Sigmoid colon (tissue), 7 donors: ENCODE measurements at regions of chr9 and their contacts with region 1.

Region 1: DNA sequence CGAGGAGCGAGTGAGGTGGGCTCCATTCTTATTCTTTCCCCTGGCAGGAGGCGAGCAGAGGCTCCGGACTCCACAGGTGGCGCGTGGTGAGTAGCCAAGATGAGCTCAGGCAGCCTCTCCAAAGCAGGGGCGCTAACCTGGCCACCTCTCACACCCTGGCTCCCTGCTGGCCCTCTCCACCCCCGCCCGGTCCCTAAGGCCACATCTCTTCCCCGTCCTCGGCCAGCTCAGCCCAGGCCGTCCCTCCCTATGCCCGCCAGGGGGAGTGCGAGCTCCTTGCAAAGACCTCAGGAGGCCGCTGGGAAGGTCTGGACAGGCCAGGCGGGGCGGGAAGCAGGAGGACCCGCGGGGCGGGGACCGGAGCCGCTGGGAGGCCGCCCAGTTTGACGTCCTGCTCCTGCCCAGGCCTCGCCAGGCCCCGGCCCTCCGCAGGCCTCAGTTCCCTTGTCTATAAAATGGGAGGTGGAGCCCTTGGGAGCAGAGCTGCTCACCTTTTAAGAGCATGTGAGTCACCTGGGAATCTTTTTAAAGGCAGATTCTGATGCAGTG is 46.3 kb upstream of the GGTA1 start:
- DNase-seq: peak; percentile 98
- H3K4me3 ChIP-seq: peak overlapping the region in 1 of 4 donors; percentile 30
- H3K27ac ChIP-seq: peak overlapping the region in 2 of 4 donors; percentile 18 to 41
- H3K4me1 ChIP-seq: peaks cover 0 to 20% (median 15%) of the 10 kb centered on the region in 4 donors
- H3K27me3 ChIP-seq: no peaks in the 10 kb centered on the region
- CTCF ChIP-seq: peak; percentile 96 to 98 (median 97)
- EP300 ChIP-seq: no peak
- POLR2A ChIP-seq: no peak

Region 2: DNA sequence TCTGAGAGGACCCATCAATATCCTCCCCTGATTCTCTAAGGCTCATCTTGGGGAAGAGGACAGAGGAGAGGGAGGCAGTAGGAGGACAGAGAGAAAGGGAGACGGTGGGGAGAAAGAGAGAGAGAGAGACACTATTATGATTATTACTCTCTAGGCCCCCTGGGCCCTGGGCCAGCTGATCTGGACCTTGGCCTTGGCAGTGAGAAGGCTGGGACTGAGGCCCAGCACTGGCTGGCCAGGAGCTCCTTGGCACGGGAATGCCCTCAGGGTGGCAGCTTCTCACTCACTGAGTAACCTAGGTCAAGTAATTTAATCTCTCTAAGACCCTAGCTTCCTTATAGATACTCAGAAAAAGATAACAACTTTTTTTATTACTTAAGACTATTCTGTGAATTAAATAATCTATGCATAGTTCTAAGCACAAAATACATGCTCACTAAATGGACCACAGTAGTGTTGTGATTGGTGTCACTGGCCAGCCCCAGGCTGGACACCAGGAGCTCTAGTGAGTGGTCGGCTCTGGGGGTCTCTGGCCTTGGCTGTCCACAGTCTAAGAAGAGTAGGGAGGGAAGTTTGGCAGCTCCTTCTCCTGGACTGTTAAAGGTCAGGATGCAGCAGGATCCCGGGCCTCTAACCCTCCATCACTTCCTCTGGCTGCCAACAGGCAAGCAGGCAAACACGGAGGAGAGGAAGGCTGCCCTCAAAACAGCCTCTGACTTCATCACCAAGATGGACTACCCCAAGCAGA is 228.0 kb before region 1 on chr9:
- intact Hi-C with region 1: no loop called
- DNase-seq: no peak
- H3K4me3 ChIP-seq: no peak overlapping the region
- H3K27ac ChIP-seq: peak overlapping the region; percentile 91 to 99 (median 94)
- H3K4me1 ChIP-seq: peaks cover 0 to 78% (median 64%) of the 10 kb centered on the region in 4 donors
- H3K27me3 ChIP-seq: no peaks in the 10 kb centered on the region
- CTCF ChIP-seq: no peak
- EP300 ChIP-seq: no peak
- POLR2A ChIP-seq: no peak

Region 3: DNA sequence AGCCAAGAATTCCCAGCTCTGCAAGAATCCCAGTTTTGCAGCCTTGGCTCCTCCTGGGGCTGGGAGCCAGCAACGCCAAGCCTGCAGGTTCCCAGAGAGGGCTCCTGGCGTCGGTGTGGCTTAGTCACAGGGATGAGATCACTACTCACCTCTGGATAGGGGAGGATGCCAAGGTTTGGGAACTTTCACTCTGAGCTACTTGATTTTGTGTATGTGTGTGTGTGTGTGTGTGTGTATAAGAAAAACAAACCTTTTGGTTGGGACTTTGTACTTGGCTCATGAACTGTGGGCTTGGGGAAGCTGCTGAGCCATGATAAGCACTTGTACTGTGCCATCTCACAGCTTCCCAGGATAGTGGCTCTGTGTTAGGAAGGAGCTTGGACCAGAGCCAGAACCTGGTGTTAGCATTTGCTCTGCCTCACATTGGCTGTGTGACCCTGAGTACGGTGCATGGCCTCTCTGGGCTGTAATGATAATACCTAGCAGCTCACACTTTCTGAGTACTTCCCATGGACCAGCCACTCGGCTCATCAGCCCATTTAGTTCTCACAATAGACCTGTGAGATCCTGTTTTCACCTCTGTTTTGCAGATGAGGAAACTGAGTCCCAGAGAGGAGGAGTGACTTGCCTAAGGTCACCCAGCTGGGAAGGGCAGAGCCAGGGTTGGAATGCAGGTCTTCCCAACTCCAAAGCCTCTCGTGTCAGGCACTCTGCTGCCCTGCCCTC is 64.1 kb after region 1 on chr9:
- intact Hi-C with region 1: loop called (anchors 5 kb)
- DNase-seq: peak; percentile 88
- H3K4me3 ChIP-seq: no peak overlapping the region
- H3K27ac ChIP-seq: peak overlapping the region; percentile 66 to 84 (median 78)
- H3K4me1 ChIP-seq: peaks cover 0 to 82% (median 54%) of the 10 kb centered on the region in 4 donors
- H3K27me3 ChIP-seq: no peaks in the 10 kb centered on the region
- CTCF ChIP-seq: no peak
- EP300 ChIP-seq: no peak
- POLR2A ChIP-seq: no peak

Region 4: GRCh38 chr9:121634329-121635261 is 88.6 kb after region 1 on chr9:
- intact Hi-C with region 1: loop called (anchors 5 kb)
- DNase-seq: no peak
- H3K4me3 ChIP-seq: no peak overlapping the region
- H3K27ac ChIP-seq: peak overlapping the region in 3 of 4 donors; percentile 66 to 80 (median 69)
- H3K4me1 ChIP-seq: peaks cover 0 to 85% (median 67%) of the 10 kb centered on the region in 4 donors
- H3K27me3 ChIP-seq: no peaks in the 10 kb centered on the region
- CTCF ChIP-seq: peak in 3 of 4 experiments; percentile 35 to 44 (median 37)
- EP300 ChIP-seq: no peak
- POLR2A ChIP-seq: no peak

Region 5: DNA sequence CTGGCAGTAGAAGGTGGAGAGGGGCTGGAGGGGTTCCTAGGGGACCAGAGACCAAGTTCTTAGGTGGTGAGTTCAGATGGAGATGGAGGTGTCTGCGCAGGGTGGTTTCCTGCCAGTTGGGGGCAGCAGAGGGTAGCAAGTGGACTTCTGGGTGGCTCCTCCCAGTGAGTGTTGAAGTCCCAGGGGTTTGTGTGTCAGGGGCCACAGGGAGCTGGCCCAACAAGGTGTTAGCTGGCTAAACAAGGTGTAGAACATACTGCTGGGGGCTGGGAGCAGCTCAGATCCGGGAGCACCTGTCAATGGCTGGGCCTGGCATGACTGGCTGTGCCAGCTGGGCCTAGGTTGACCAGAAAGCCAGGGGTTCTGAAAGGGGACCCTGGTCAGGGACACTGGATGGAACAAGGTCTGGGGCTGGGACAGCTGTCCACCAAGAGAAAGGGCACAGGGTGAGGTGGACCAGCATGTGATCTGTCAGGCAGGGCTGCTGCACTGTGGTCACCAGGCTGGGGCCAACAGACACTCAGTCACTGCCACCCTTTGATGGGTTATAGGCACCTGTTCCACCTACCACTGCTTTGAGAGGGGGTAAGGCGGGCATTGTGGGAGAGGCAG is 141.1 kb after region 1 on chr9:
- intact Hi-C with region 1: loop called (anchors 1 kb)
- DNase-seq: peak; percentile 91
- H3K4me3 ChIP-seq: no peak overlapping the region
- H3K27ac ChIP-seq: peak overlapping the region in 2 of 4 donors; percentile 54 to 59
- H3K4me1 ChIP-seq: peaks cover 0 to 35% (median 25%) of the 10 kb centered on the region in 4 donors
- H3K27me3 ChIP-seq: no peaks in the 10 kb centered on the region
- CTCF ChIP-seq: peak; percentile 80 to 85 (median 84)
- EP300 ChIP-seq: no peak
- POLR2A ChIP-seq: no peak

Region 6: GRCh38 chr9:121992571-121993212 is 446.7 kb after region 1 on chr9:
- intact Hi-C with region 1: loop called (anchors 1 kb)
- DNase-seq: peak; percentile 85
- H3K4me3 ChIP-seq: no peak overlapping the region
- H3K27ac ChIP-seq: no peak overlapping the region
- H3K4me1 ChIP-seq: peaks cover 0 to 9% (median 6%) of the 10 kb centered on the region in 4 donors
- H3K27me3 ChIP-seq: no peaks in the 10 kb centered on the region
- CTCF ChIP-seq: peak; percentile 67 to 77 (median 75)
- EP300 ChIP-seq: no peak
- POLR2A ChIP-seq: no peak

Region 7: GRCh38 chr9:122092611-122093506 is 546.9 kb after region 1 on chr9 and contains the start of gene TTLL11:
- intact Hi-C with region 1: loop called (anchors 5 kb)
- DNase-seq: peak; percentile 99
- H3K4me3 ChIP-seq: peak within 1 kb of the TSS; percentile 89 to 97 (median 94)
- H3K27ac ChIP-seq: peak within 1 kb of the TSS; percentile 84 to 92 (median 91)
- H3K4me1 ChIP-seq: peaks cover 0 to 52% (median 51%) of the 10 kb centered on the region in 4 donors
- H3K27me3 ChIP-seq: no peaks in the 10 kb centered on the region
- CTCF ChIP-seq: no peak
- EP300 ChIP-seq: peak in 1 of 4 donors; percentile 75
- POLR2A ChIP-seq: peak in 1 of 2 donors; percentile 30
- total RNA-seq, gene TTLL11: 27.6 to 40.7 (median 30.8) TPM

Region 8: DNA sequence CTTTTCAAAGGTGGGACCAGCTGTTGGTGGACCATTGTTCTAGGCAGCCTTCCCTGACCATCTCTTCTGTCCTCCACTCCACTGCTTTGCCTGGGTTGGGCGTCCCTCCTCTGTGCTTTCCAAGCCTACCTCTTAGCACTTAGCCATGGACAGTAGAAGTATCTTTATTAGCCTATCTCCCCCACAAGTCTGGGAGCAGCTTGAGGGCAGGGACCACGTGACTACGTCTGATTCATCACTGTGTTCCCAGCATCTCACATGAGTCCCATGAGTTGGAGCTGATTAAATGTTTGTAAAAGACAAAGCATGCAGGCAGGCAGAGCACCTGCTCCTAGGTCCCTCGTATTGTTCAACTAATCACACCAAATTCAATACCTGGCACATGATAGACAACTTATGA is 634.7 kb after region 1 on chr9:
- intact Hi-C with region 1: no loop called
- DNase-seq: no peak
- H3K4me3 ChIP-seq: no peak overlapping the region
- H3K27ac ChIP-seq: no peak overlapping the region
- H3K4me1 ChIP-seq: no peaks in the 10 kb centered on the region
- H3K27me3 ChIP-seq: no peaks in the 10 kb centered on the region
- CTCF ChIP-seq: no peak
- EP300 ChIP-seq: no peak
- POLR2A ChIP-seq: no peak